Left ventricle myocardium inferior (tissue), 1 donor: ENCODE measurements at regions of chr11 and their contacts with region 1.

Region 1: GRCh38 chr11:75445315-75445953 is 12.4 kb upstream of the KLHL35 start:
- DNase-seq: peak; percentile 71
- H3K4me3 ChIP-seq: no peak overlapping the region
- H3K27ac ChIP-seq: no peak overlapping the region
- H3K4me1 ChIP-seq: peaks cover 10% of the 10 kb centered on the region
- H3K27me3 ChIP-seq: no peaks in the 10 kb centered on the region
- CTCF ChIP-seq: peak; percentile 97

Region 2: GRCh38 chr11:75399344-75400145 is 45.9 kb before region 1 on chr11 and contains the start of gene RPS3:
- intact Hi-C with region 1: no loop called
- DNase-seq: peak; percentile 92
- H3K4me3 ChIP-seq: peak within 1 kb of the TSS; percentile 82
- H3K27ac ChIP-seq: peak within 1 kb of the TSS; percentile 88
- H3K4me1 ChIP-seq: peaks cover 37% of the 10 kb centered on the region
- H3K27me3 ChIP-seq: no peaks in the 10 kb centered on the region
- CTCF ChIP-seq: peak; percentile 24
- total RNA-seq, gene RPS3: 864 TPM

Region 3: DNA sequence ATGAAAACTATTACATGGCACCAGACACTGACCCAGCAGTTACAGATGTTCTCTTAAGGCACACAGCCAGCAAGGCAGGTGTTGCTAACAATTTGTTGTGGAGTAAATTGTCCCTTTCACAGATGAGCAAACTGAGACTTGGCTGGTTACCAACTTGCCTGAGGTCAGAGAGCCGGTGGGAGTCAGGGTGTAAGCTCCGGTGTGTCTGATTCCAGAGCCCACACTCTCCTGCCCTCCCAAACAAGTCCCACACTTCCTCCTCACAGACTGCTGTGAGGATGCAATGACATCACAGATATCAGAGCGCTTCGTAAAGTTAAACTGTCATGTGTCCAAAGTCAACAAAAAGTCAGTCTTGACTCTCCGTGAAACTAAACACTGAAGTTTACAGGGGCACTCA is 67.8 kb after region 1 on chr11:
- intact Hi-C with region 1: no loop called
- DNase-seq: no peak
- H3K4me3 ChIP-seq: no peak overlapping the region
- H3K27ac ChIP-seq: no peak overlapping the region
- H3K4me1 ChIP-seq: no peaks in the 10 kb centered on the region
- H3K27me3 ChIP-seq: no peaks in the 10 kb centered on the region
- CTCF ChIP-seq: no peak

Region 4: GRCh38 chr11:75532200-75533048 is 87.0 kb after region 1 on chr11:
- intact Hi-C with region 1: loop called (anchors 1 kb)
- DNase-seq: peak; percentile 55
- H3K4me3 ChIP-seq: no peak overlapping the region
- H3K27ac ChIP-seq: no peak overlapping the region
- H3K4me1 ChIP-seq: peaks cover 16% of the 10 kb centered on the region
- H3K27me3 ChIP-seq: no peaks in the 10 kb centered on the region
- CTCF ChIP-seq: peak; percentile 92

Region 5: DNA sequence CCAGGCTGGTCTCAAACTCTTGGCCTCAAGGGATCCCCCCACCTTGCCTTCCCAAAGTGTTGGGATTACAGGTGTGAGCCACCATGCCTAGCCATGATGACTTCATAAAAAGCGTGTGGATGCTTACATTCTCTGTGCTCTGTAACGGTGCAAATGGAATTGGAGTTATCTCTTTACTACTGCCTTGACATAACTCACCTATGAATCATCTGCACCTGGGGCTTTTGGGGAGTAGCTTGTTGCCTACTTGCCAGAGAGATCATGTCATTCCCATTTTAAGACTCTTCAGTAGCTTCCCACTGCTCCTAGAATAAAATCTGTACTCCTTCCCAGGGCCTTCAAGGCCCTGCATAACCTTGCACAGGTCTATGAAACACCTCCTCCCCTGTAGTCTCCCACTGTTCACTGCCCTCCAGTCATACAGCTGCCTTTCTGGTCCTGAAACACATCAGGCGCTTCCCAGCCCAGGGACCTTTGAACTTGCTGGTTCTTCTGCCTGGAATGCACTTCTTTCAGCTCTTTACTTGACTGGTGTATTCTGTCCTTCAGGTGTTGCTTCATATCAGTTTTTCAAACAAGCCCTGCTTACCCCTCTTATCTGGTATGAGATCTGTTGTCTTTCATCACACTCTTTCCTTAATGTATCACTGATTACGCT is 252.6 kb after region 1 on chr11:
- intact Hi-C with region 1: no loop called
- DNase-seq: no peak
- H3K4me3 ChIP-seq: no peak overlapping the region
- H3K27ac ChIP-seq: no peak overlapping the region
- H3K4me1 ChIP-seq: peaks cover 10% of the 10 kb centered on the region
- H3K27me3 ChIP-seq: no peaks in the 10 kb centered on the region
- CTCF ChIP-seq: no peak